Caco-2 (cell line): ENCODE measurements at regions of chr3 and their contacts with region 1.

Region 1: DNA sequence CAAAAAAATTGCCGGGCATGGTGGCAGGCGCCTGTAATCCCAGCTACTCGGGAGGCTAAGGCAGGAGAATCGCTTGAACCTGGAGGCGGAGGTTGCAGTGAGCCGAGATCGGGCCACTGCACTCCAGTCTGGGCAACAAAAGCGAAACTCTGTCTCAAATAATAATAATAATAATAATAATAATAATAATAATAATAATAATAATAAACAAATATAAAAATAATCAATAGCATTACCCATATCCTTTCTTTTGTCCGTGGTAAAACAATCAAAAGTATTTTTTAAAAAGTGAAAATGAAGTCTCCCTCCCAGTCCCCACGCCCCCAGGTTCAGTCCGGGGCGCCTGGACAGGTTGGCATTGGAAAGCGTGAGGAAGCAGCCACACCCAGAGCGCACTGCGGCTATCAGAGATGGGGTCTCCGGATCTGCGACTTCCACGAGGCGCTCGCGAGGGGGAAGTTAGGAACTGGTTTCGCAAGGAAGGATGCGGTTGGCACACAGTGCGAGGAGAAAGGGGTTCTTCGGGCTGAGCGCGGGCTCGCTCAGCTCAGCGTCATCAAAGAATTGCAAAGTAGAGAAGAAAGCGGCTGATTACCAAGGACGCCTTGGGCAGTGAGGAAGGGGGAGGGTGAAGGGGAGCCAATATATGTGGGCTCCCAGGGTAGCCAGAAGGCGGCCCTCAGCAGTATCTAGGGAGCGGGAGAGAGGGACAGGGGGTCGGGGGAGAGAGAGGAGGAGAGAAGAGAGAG is 69.5 kb upstream of the EPHB3 start:
- DNase-seq: no peak
- H3K4me3 ChIP-seq: no peak overlapping the region
- H3K4me3 Mint-ChIP-seq: no peak overlapping the region
- H3K27ac Mint-ChIP-seq: no peak overlapping the region
- H3K4me1 ChIP-seq: peaks cover 31% of the 10 kb centered on the region
- H3K4me1 Mint-ChIP-seq: peaks cover 21% of the 10 kb centered on the region
- H3K27me3 ChIP-seq: no peaks in the 10 kb centered on the region
- H3K27me3 Mint-ChIP-seq: no peaks in the 10 kb centered on the region
- CTCF ChIP-seq: no peak

Region 2: DNA sequence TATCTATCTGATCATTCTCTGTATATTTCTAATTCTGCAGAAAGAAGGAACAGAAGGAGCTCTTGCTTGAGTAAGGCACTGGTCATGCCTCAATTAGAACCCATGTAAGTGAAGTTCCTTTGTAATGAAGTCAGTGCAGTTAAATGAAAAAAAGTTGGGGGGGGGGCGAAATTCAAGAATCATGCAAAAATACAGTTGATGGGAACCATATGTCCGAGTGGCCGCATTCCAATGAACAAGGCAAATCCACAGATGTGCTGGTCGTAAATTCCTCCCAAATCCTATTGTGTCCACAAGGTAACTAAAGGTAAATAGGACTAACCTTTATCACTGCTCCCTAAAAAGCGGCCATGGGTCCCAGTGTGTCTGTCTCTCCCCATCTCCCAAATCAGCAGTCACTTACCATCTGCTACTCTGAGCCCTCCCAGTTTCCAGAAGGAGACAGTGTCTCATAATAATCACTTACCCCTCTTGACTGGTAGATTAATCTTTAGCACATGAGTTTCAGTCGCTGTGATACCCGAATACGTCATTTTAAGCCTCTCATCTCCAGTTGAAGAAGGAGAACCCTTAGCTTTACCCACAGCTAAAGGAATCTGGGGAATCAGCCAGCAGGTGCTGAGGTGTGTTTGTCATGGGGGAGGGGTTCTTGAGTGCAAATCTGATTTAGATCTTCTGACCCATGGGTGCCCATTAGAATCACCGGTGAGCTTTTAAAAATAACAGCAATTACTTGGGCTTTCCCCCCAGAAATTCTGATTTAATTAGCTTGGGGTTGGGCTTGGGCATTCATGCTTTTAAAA is 13.2 kb after region 1 on chr3:
- CTCF ChIA-PET with region 1: interaction called, 3 read pairs
- POLR2A ChIA-PET with region 1: no interaction called
- intact Hi-C with region 1: loop called (anchors 2 kb)
- DNase-seq: peak in 1 of 2 experiments; percentile 17
- H3K4me3 ChIP-seq: no peak overlapping the region
- H3K4me3 Mint-ChIP-seq: peak overlapping the region; percentile 9
- H3K27ac Mint-ChIP-seq: peak overlapping the region; percentile 43
- H3K4me1 ChIP-seq: peaks cover 18% of the 10 kb centered on the region
- H3K4me1 Mint-ChIP-seq: peaks cover 14% of the 10 kb centered on the region
- H3K27me3 ChIP-seq: no peaks in the 10 kb centered on the region
- H3K27me3 Mint-ChIP-seq: no peaks in the 10 kb centered on the region
- CTCF ChIP-seq: no peak